ENCODE measurements at regions of chr5 and their contacts with region 1.

Region 1: DNA sequence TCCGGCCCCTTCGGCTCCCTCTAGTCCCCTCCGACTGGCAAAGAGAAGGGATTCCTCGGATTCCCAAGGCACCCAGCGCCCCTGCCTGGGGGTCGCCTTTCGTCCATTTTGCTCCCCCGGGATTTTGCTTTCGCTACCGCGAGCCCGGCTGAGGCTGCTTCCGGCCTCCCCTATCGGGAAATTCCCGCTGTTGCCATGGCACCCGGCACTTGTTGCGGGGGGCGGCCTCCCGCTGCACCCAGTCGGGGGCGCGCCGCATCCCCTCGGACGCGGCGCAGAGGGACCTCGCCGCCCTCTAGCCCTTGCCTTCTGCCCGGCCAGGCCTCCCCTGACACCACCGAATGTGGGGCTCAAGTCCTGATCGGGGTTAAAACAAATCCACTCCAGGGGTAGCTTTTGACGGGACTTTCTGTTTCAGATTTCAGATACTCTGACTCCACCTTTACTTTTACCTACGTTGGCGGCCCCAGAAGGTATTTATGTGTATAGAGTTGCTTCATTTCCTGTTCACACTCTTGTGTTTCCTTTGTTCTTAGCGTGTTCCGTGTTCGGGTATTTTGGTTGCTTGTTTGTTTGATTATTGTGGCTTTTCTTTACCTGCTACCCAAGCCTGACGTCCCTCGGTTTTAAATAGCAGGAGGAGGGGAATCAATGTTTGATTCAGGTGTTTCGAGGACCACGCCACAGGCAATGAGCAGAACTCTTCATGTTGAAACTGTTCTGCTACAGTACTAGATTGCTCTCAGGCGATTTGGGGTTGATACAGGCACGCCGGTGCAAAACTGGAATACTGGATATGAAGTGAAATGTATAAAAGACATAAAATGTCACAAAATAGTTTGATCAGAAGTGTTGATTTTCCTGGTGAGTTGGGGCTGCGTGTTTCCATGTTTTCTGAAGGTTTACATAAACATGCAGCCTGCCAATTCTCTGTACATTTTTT is 1.5 kb downstream of the PARP8 start:
- DNase-seq: peak; percentile 80 to 95 (median 89)
- ATAC-seq: peak; percentile 79
- H3K4me3 ChIP-seq: peak overlapping the region; percentile 96
- H3K4me3 Mint-ChIP-seq: peak overlapping the region; percentile 92 to 99 (median 98)
- H3K27ac ChIP-seq: peak overlapping the region; percentile 97
- H3K27ac Mint-ChIP-seq: peak overlapping the region; percentile 97 to 100 (median 98)
- H3K4me1 ChIP-seq: peaks cover 23 to 37% of the 10 kb centered on the region in 2 donors
- H3K4me1 Mint-ChIP-seq: peaks cover 42 to 76% (median 70%) of the 10 kb centered on the region in 7 donors
- H3K27me3 ChIP-seq: no peaks in the 10 kb centered on the region
- H3K27me3 Mint-ChIP-seq: peaks cover 0 to 2% (median 0%) of the 10 kb centered on the region in 5 donors

Region 2: DNA sequence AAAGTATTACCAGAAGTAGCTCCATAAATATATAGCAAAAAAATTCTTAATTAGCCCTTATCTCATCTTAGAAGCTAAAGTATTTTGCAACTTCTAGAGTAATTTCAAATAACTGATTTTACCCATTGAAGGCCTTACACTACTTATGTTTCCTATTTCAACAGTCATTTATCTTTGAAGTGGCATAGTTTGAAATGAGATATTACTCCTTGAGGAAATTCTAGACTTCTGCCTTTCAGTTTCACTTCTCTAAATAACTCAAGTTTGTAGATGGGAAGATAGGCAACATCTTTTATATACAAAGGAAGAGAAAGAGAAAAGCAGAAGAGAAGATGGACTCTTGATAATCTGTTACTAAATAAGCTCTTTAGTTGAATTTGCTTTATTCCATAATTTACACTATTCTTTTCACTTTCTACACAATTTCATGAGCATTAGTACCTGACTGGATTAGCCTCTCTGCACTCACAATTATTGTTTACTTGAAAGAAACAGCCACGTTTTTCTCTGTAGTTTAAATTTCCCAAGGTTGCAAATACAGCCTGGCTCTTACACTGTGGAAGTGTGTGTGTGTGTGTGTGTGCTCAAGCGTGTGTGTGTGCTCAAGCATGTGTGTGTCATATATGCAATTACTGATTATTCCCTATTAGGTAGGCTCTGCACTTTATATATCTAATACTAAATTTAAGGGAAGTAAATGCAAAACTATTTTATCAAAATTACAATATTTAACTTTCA is 166.3 kb before region 1 on chr5:
- CTCF ChIA-PET with region 1: no interaction called
- POLR2A ChIA-PET with region 1: no interaction called
- intact Hi-C with region 1: loop called in 1 of 2 experiments (anchors 5 kb)
- DNase-seq: peak in 4 of 9 donors; percentile 3 to 15 (median 7)
- ATAC-seq: peak; percentile 79
- H3K4me3 ChIP-seq: no peak overlapping the region
- H3K4me3 Mint-ChIP-seq: peak overlapping the region in 9 of 10 donors; percentile 14 to 72 (median 67)
- H3K27ac ChIP-seq: no peak overlapping the region
- H3K27ac Mint-ChIP-seq: peak overlapping the region; percentile 45 to 89 (median 78)
- H3K4me1 ChIP-seq: peaks cover 0 to 6% of the 10 kb centered on the region in 2 donors
- H3K4me1 Mint-ChIP-seq: peaks cover 6 to 22% (median 14%) of the 10 kb centered on the region in 7 donors
- H3K27me3 ChIP-seq: no peaks in the 10 kb centered on the region
- H3K27me3 Mint-ChIP-seq: peaks cover 0 to 15% (median 0%) of the 10 kb centered on the region in 5 donors

Region 3: GRCh38 chr5:50576686-50577256 is 91.2 kb before region 1 on chr5:
- CTCF ChIA-PET with region 1: no interaction called
- POLR2A ChIA-PET with region 1: interaction called, 4 read pairs
- intact Hi-C with region 1: loop called in 1 of 2 experiments (anchors 5 kb)
- DNase-seq: no peak
- ATAC-seq: no peak
- H3K4me3 ChIP-seq: no peak overlapping the region
- H3K4me3 Mint-ChIP-seq: no peak overlapping the region
- H3K27ac ChIP-seq: no peak overlapping the region
- H3K27ac Mint-ChIP-seq: peak overlapping the region in 1 of 9 donors; percentile 78
- H3K4me1 ChIP-seq: peaks cover 0 to 20% of the 10 kb centered on the region in 2 donors
- H3K4me1 Mint-ChIP-seq: peaks cover 12 to 30% (median 19%) of the 10 kb centered on the region in 7 donors
- H3K27me3 ChIP-seq: no peaks in the 10 kb centered on the region
- H3K27me3 Mint-ChIP-seq: peaks cover 0 to 6% (median 0%) of the 10 kb centered on the region in 5 donors

Region 4: DNA sequence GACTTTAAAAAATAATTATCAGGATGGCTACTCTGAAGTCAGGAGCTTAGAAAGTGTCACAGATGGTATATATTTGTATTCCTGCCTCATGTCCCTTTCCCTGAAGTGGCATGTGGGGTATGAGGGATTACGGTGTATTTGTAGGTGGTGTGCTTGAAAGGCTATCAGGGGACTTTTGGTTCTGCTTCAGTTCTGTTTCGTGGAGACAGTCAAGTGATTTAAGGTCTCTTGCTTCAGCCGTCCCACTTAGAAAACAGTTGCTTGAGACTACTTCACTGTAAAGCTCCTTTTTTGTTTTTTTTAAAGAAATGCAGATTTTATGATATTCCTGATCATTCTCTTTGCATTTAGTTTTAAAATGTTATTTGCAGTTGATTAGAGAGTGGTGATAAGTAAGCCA is 16.8 kb after region 1 on chr5:
- CTCF ChIA-PET with region 1: no interaction called
- POLR2A ChIA-PET with region 1: no interaction called
- intact Hi-C with region 1: loop called in 1 of 2 experiments (anchors 1 kb)
- DNase-seq: no peak
- ATAC-seq: no peak
- H3K4me3 ChIP-seq: no peak overlapping the region
- H3K4me3 Mint-ChIP-seq: no peak overlapping the region
- H3K27ac ChIP-seq: no peak overlapping the region
- H3K27ac Mint-ChIP-seq: peak overlapping the region in 3 of 9 donors; percentile 36 to 63 (median 62)
- H3K4me1 ChIP-seq: peaks cover 22 to 50% of the 10 kb centered on the region in 2 donors
- H3K4me1 Mint-ChIP-seq: peaks cover 29 to 70% (median 53%) of the 10 kb centered on the region in 7 donors
- H3K27me3 ChIP-seq: no peaks in the 10 kb centered on the region
- H3K27me3 Mint-ChIP-seq: no peaks in the 10 kb centered on the region

Region 5: GRCh38 chr5:50744776-50745175 is 76.9 kb after region 1 on chr5:
- CTCF ChIA-PET with region 1: interaction called, 6 read pairs
- POLR2A ChIA-PET with region 1: interaction called, 19 read pairs
- intact Hi-C with region 1: loop called in 1 of 2 experiments (anchors 1 kb)
- DNase-seq: peak in 5 of 9 donors; percentile 26 to 48 (median 30)
- ATAC-seq: peak; percentile 65
- H3K4me3 ChIP-seq: peak overlapping the region; percentile 43
- H3K4me3 Mint-ChIP-seq: peak overlapping the region; percentile 82 to 98 (median 88)
- H3K27ac ChIP-seq: peak overlapping the region; percentile 72
- H3K27ac Mint-ChIP-seq: peak overlapping the region; percentile 78 to 98 (median 91)
- H3K4me1 ChIP-seq: peaks cover 39% of the 10 kb centered on the region in 2 donors
- H3K4me1 Mint-ChIP-seq: peaks cover 56 to 95% (median 86%) of the 10 kb centered on the region in 7 donors
- H3K27me3 ChIP-seq: no peaks in the 10 kb centered on the region
- H3K27me3 Mint-ChIP-seq: no peaks in the 10 kb centered on the region